ENCODE measurements at regions of chr19 and their contacts with region 1.

Region 1: GRCh38 chr19:4638828-4639530 is at the start of gene TNFAIP8L1:
- DNase-seq: peak; percentile 98 to 99 (median 99)
- ATAC-seq: peak; percentile 95
- H3K4me3 ChIP-seq: peak within 1 kb of the TSS; percentile 34
- H3K4me1 ChIP-seq: peaks cover 24% of the 10 kb centered on the region
- CTCF ChIP-seq: no peak
- total RNA-seq, gene TNFAIP8L1: 5.1 to 47.6 (median 10.7) TPM

Region 2: GRCh38 chr19:4567584-4568071 is 71.4 kb before region 1 on chr19:
- intact Hi-C with region 1: loop called in 1 of 2 experiments (anchors 5 kb)
- DNase-seq: peak; percentile 70 to 81 (median 76)
- ATAC-seq: peak; percentile 85
- H3K4me3 ChIP-seq: no peak overlapping the region
- H3K4me1 ChIP-seq: no peaks in the 10 kb centered on the region
- CTCF ChIP-seq: peak; percentile 55